Activated T-helper 1 cell treated with anti-CD3 and anti-CD28 coated beads, Interleukin-12 subunit alpha, Interleukin-12 subunit beta, Interleukin-2, Interleukin-4 antibody, amounts not matched to agents 30 ng/mL and 10 ng/mL and 1 ng/mL, durations not matched to agents 14 hours and 24 hours and 36 hours (primary cell): ENCODE measurements at regions of chr5 and their contacts with region 1.

Region 1: DNA sequence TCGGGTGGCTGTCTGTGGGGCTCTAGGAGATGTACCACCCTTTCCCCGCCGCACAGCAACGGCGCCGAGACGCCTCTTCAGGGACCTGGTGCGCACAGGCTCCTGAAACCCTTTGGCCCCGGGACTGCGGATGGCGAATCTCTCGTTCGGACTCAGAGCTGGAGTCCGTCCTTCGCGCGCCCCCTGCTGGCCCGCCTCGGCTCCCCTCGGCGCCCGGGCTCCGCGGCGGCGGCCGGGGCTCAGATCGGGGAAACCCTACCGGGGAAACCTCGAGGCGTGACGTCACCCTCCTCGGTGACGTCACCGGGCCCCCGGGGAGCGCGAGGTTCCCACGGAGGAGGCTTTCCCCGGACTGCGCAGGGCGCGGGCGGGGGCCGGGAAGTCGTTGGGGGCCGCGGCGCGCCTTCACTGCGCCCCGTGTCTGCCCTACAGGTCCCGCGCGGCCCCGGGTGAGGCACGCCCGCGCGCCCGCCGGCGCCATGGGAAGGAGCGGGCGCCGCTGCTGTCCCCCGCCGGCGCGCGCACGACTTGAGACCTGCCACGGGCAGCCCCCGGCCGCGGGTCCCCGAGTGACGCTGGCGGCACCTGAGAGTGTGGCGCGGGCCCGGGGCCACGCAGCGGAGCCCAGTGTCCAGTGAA is 7.9 kb downstream of the PRR7 start:
- DNase-seq: peak; percentile 89
- H3K4me3 Mint-ChIP-seq: no peak overlapping the region
- H3K27ac Mint-ChIP-seq: peak overlapping the region; percentile 40
- H3K4me1 Mint-ChIP-seq: peaks cover 11% of the 10 kb centered on the region
- H3K27me3 Mint-ChIP-seq: peaks cover 18% of the 10 kb centered on the region

Region 2: DNA sequence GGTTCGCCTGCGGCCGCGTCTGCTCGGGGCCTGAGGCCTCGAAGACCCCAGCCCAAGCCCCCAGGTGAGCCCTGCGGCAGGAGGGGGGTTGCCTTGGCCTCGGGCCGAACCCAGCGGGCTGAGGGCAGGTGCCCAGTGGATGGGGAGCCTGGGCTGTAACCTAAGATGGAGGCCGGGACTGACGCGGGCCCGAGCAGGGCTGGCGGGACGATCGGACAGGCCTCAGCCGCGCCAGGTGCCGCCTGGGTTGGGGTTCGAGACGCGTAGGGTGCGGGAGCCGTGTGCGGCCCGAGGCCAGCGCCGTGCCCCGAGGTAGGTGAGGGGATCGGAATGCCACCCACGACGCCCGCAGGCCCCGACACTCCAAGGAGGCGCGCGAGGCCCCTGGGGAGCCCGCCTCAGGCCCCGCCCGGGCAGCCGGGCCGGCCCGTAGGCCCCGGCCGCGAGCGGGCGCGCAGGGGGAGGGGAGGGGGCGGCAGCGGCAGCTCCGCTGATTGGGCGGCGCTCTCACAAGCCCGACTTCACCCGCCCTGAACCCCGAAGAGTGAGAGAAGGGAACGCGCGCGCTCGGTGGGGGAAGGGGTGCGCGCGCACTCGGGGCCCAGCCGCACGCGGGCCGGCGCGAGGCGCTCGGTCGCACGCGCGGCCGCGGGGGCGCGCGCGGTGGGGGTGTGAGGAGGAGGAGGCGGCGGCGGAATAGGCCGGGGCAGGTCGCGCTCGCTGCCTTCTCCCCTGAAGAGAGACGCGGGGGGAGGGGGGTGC is 321.2 kb before region 1 on chr5 and contains the start of gene NSD1:
- intact Hi-C with region 1: loop called (anchors 5 kb)
- DNase-seq: peak; percentile 90
- H3K4me3 Mint-ChIP-seq: peak within 1 kb of the TSS; percentile 93
- H3K27ac Mint-ChIP-seq: peak within 1 kb of the TSS; percentile 86
- H3K4me1 Mint-ChIP-seq: peaks cover 48% of the 10 kb centered on the region
- H3K27me3 Mint-ChIP-seq: no peaks in the 10 kb centered on the region
- total RNA-seq, gene NSD1: 108 and 112 TPM in 2 replicates

Region 3: GRCh38 chr5:177317959-177318377 is 136.5 kb before region 1 on chr5:
- intact Hi-C with region 1: loop called (anchors 2 kb)
- DNase-seq: peak; percentile 61
- H3K4me3 Mint-ChIP-seq: no peak overlapping the region
- H3K27ac Mint-ChIP-seq: no peak overlapping the region
- H3K4me1 Mint-ChIP-seq: peaks cover 22% of the 10 kb centered on the region
- H3K27me3 Mint-ChIP-seq: no peaks in the 10 kb centered on the region

Region 4: DNA sequence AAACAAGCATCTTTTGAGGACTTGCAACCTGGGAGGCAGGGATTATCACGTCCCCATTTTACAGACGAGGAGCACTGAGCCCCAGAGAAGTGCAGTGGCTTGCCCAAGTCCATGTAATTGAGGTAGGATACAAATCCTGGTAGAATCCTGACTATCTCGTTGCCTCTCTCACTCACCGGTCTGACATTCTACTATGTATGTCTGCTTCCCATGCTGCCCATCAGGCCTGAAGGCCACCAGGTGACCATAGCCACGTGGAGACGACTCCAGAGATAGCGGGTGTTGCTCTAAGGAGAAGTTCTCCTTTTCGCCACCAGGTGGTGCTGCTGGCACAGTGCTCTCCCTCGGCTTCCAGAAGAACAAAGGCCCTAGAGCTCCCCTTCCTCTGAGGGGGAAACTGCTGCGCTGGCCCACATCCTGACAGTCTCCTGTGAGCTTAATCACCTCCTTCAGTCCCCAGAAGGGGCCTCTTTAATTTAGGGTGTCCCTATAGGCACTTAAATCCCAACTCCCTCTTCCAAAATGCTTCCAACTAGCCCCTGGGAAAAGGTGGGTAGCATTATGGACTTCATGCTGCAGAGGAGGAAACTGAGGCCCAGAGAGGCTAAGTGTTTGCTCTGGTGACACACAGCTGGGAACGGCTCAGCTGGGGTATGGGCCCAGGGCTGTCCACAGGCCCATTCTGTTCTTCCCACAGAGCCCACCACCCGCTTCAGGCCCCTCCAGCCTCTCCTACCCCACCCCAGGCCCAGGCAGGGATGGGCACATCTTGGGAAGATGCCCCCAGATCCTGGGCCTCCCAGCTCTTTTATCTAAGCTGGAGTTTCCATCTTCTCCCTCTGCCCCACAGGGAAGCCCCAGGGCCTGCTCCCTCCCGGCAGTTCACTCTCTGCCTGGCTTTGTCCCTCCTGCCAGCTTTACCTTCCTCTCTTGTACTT is 63.9 kb before region 1 on chr5:
- intact Hi-C with region 1: loop called (anchors 1 kb)
- DNase-seq: peak; percentile 80
- H3K4me3 Mint-ChIP-seq: peak overlapping the region; percentile 5
- H3K27ac Mint-ChIP-seq: peak overlapping the region; percentile 65
- H3K4me1 Mint-ChIP-seq: peaks cover 34% of the 10 kb centered on the region
- H3K27me3 Mint-ChIP-seq: peaks cover 3% of the 10 kb centered on the region

Region 5: DNA sequence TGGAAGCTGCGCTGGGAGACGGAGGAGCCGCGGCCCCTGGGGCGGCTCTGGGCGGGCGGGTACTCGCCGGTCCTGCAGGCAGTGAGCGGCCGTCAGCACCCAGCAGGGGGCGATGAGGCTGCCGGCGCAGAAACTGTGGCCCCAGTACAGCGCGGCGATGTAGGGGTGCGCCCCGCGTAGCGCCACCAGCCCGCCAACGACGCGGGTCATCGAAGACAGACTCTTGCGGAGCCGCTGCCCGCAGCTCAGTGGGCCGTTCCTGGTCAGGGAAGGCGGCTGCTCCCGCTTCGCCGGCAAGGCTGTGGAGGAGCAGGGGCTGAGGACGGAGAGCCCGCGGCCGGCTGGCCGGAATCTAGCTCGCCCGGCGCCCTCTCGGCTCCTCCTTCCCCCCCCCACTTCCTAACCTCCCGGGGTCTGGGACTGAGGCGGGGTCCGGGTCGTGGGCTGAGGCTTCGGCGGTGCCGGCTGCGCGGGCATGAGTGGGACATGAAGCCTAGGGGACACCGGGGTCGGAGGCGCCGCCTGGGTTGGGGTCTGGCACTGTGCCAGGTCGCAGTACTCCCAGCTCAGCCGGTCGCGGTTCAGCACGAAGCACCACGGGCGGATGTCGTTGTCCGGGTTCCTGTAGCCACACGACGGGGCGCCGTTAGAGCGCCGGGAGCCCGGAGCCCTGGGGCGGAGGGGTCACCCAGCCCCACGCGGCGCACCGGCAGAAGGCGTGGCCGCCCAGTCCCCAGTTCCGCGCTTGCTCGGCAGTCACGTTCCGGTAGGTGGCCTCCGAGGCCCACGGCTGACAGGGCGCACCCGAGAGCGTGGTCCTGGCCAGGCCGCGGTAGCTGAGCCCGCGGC is 50.5 kb before region 1 on chr5:
- intact Hi-C with region 1: loop called (anchors 1 kb)
- DNase-seq: peak; percentile 75
- H3K4me3 Mint-ChIP-seq: peak overlapping the region; percentile 84
- H3K27ac Mint-ChIP-seq: no peak overlapping the region
- H3K4me1 Mint-ChIP-seq: peaks cover 17% of the 10 kb centered on the region
- H3K27me3 Mint-ChIP-seq: peaks cover 34% of the 10 kb centered on the region

Region 6: GRCh38 chr5:177472460-177473441 is 18.2 kb after region 1 on chr5:
- intact Hi-C with region 1: loop called (anchors 1 kb)
- DNase-seq: no peak
- H3K4me3 Mint-ChIP-seq: peak overlapping the region; percentile 67
- H3K27ac Mint-ChIP-seq: no peak overlapping the region
- H3K4me1 Mint-ChIP-seq: peaks cover 31% of the 10 kb centered on the region
- H3K27me3 Mint-ChIP-seq: peaks cover 16% of the 10 kb centered on the region

Region 7: GRCh38 chr5:177478711-177479646 is 24.5 kb after region 1 on chr5:
- intact Hi-C with region 1: loop called (anchors 1 kb)
- DNase-seq: no peak
- H3K4me3 Mint-ChIP-seq: no peak overlapping the region
- H3K27ac Mint-ChIP-seq: peak overlapping the region; percentile 96
- H3K4me1 Mint-ChIP-seq: peaks cover 47% of the 10 kb centered on the region
- H3K27me3 Mint-ChIP-seq: peaks cover 10% of the 10 kb centered on the region